ENCODE measurements at regions of chr15 and their contacts with region 1.

Region 1: GRCh38 chr15:70488002-70488605 is 275.3 kb downstream of the UACA start:
- DNase-seq: peak; percentile 58 to 82 (median 62)
- ATAC-seq: peak; percentile 29 to 75 (median 60)
- H3K4me3 ChIP-seq: no peak overlapping the region
- H3K27ac ChIP-seq: peak overlapping the region in 1 of 12 donors; percentile 76
- H3K4me1 ChIP-seq: peaks cover 0 to 74% (median 0%) of the 10 kb centered on the region in 12 donors
- H3K27me3 ChIP-seq: peaks cover 0 to 6% (median 0%) of the 10 kb centered on the region in 9 donors
- CTCF ChIP-seq: peak; percentile 91 to 97 (median 95)
- POLR2A ChIP-seq: no peak

Region 2: DNA sequence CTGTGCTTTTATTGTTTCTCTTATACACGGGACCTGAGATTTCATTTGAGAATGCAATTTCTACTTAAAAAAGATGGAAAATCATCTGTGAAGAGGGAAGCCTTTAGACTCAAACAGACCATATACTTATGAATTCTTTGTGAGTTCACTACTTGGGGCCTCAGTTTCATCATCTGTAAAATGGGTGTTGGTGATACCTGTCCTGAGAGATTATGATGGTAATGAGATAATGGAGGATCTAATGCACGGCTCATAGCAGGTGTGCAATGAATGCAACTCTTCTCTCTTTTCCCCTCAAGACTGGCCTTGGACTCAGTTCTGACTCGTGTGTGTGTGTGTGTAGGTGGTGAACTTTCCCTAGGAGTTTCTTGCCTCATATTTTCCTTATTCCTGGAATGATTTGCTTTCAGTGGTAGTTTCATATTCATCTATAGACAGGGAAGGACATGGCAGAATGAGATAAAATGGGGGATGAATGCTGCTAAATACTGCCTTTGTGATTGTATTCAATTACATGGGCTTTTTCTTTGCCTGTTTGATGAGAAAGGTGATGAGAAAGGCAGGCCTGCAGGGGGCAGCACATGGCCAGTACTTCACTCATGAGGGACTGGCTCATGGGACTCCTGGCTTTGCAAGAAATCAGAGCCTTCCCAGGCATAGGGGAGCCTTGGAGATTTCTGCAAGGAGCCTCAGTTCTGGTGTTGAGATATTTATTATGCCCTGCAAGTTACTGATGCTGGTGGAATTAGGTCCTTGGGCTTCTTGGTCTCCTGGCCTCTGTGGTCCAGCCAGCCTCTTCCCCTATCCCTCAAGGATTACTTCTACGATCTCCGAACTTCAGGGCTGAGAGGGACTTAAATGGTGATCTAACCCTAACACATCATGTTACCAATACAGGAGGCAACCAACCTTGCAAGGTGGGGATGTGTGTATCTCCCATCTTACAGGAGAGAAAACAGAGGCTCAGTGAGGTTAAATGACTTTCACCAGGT is 964.8 kb before region 1 on chr15:
- intact Hi-C with region 1: loop called in 4 of 10 experiments (anchors 2 to 5 kb)
- DNase-seq: peak; percentile 56 to 81 (median 68)
- ATAC-seq: peak in 3 of 4 donors; percentile 65 to 75 (median 70)
- H3K4me3 ChIP-seq: no peak overlapping the region
- H3K27ac ChIP-seq: no peak overlapping the region
- H3K4me1 ChIP-seq: no peaks in the 10 kb centered on the region
- H3K27me3 ChIP-seq: peaks cover 0 to 7% (median 0%) of the 10 kb centered on the region in 9 donors
- CTCF ChIP-seq: peak; percentile 38 to 74 (median 65)
- POLR2A ChIP-seq: no peak

Region 3: DNA sequence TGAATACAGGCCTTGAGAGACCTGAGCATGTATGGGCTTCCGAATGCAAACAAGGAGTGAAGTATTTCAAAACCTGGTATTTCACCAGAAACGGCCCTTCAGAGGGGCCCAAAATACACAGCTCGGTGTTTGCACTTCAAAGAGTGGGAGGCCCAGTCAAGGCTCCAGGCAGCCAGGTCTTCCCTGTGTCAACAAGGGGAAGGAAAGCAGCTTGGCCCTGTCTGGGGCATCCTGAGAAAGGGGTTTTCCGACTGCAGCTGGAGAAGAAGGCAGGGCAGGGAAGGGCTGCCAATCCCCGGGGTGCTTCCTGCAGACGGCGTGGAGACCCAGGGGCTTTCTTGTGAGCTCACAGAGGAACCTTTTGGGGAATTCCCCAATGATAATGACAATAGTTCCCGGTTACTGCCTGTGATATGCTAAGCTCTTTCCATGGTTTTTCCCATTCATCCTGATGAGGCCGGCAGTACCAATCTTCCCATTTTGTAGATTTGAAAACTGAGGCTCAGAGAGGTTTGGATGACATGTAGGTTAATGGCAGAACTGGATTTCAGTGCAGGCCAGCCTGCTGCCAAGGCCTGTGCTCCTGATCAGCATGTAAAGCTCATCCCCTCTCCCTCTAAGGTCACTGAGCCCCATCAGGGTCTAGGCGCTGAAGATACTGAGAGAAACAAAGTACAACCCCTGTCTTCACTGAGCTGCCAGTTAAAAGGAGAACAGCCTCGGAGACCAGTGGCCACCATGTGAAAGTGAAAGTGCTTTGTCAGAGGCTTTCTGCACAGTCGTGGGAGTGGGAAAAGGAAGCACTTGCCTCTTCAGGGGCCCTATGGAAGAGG is 347.3 kb before region 1 on chr15:
- intact Hi-C with region 1: no loop called
- DNase-seq: no peak
- ATAC-seq: peak in 3 of 4 donors; percentile 18 to 70 (median 26)
- H3K4me3 ChIP-seq: peak overlapping the region in 6 of 12 donors; percentile 4 to 32 (median 12)
- H3K27ac ChIP-seq: peak overlapping the region in 2 of 12 donors; percentile 19 to 73
- H3K4me1 ChIP-seq: peaks cover 0 to 41% (median 26%) of the 10 kb centered on the region in 12 donors
- H3K27me3 ChIP-seq: peaks cover 0 to 21% (median 0%) of the 10 kb centered on the region in 9 donors
- CTCF ChIP-seq: no peak
- POLR2A ChIP-seq: no peak

Region 4: DNA sequence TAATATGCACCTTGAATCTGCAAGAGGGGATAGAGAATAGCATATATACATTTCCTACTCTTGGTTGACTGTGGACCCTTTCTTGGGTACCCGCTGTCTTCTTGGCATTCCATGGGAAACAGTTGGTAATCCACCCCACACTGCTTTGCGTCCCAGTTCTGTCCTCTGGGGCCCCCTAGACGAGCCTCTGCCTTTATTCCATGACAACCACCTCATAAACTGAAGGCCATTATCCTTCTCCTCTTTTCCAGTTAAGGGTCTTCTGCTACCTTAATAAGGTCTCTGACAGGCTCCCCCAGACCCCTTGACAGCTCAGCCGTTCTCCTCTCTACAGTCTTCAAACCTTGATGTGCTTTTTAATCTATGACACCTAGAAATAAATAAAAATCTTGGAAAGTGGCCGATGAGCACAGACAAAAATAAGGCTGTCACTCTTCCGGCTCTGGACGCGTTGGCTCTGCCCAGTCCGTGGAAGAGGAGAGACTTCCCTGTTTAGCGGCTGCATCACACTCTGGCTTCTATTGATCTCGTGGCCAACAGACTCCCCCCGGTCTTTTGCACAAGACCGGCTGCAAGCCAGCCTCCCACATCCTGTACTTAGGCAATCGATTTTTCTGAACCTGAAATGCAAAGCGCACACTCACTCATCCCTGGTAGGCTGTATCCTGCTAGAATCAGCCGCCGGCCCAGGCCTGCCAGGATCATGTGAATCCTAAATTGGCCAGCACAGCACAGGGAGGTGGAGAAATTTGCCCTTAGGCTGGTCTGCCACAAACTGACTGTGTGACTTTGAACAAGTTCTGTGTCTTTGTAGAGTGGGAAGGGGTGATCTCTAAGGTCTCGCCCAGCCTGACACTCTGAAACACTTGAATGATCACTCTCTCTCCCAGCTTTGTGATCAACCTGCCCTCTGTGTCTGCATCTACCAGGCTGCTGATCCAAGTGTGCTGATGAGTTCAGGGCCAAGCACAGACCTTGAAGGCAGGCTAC is 139.2 kb before region 1 on chr15:
- intact Hi-C with region 1: no loop called
- DNase-seq: peak in 2 of 5 donors; percentile 31 to 45
- ATAC-seq: peak in 3 of 4 donors; percentile 47 to 73 (median 69)
- H3K4me3 ChIP-seq: no peak overlapping the region
- H3K27ac ChIP-seq: peak overlapping the region in 1 of 12 donors; percentile 62
- H3K4me1 ChIP-seq: peaks cover 0 to 17% (median 0%) of the 10 kb centered on the region in 12 donors
- H3K27me3 ChIP-seq: peaks cover 0 to 3% (median 0%) of the 10 kb centered on the region in 9 donors
- CTCF ChIP-seq: no peak
- POLR2A ChIP-seq: no peak

Region 5: DNA sequence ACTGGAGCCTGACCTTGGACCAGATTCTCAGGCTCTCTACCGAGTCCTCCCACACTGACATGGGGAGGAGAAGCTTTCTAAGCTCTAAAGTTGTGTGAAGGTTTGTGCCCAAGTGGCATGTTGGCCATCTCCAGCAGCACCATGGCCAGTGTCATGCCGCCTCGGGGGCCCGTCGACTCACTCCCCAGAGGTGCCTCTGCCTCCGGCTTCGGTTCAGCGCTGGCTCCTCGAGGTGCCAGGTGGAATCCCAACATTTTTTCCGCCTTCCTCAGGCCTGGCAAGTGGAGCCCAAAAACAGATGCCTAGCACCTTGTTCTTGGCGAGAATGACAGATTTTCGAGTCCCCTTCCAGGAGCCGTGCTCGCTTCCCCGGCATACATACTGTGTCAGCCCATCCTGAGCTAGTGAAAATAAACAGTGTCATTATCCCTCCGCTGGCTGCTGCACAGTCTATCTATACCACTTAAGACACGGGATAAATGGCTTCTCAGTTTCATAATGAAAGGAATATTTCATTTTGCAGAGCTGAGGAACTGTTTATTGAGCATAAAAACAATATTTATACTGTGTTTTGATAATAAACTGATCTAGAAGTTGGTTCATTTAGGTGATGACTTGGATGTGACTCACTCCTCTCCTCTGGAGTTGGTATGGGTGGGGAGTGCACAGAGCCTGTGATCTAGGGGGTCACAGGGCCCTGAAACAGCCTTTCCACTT is 61.8 kb before region 1 on chr15:
- intact Hi-C with region 1: no loop called
- DNase-seq: no peak
- ATAC-seq: no peak
- H3K4me3 ChIP-seq: no peak overlapping the region
- H3K27ac ChIP-seq: no peak overlapping the region
- H3K4me1 ChIP-seq: no peaks in the 10 kb centered on the region
- H3K27me3 ChIP-seq: peaks cover 0 to 14% (median 0%) of the 10 kb centered on the region in 9 donors
- CTCF ChIP-seq: no peak
- POLR2A ChIP-seq: no peak